CD4-positive, alpha-beta memory T cell (primary cell): ENCODE measurements at regions of chr3 and their contacts with region 1.

Region 1: DNA sequence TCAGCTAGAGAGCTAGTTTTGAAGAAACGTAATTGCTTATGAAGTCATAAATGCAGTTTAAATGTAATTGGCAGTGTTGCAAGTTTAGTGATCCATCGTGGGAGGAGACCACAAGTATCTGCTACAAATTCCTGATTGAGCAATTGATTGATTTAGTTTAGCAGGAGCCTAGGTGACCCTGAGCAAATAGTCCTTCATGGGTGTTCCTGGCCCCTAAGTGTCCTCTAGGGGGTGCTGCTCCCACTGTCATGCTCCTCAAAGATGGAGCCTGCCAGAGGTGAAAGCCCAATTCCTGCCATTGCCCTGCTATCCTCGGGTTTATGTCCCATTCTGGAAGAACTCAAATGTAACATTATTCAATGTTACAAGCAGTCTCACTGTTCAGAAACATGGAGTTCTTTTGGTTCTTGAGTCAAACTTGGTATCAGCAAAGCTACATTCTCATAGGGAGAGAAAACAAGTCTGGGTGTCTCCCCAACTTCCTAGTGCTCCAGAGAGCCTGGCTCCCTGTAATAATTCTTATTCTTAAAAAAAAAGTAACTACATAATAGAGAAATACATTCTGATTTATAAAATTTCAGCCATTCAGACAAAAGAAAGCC is 29.8 kb upstream of the SENP5 start:
- DNase-seq: peak; percentile 67 to 73 (median 70)
- H3K4me3 ChIP-seq: no peak overlapping the region
- H3K4me3 Mint-ChIP-seq: no peak overlapping the region
- H3K27ac ChIP-seq: no peak overlapping the region
- H3K27ac Mint-ChIP-seq: peak overlapping the region in 2 of 7 donors; percentile 22 to 27
- H3K4me1 ChIP-seq: no peaks in the 10 kb centered on the region
- H3K4me1 Mint-ChIP-seq: no peaks in the 10 kb centered on the region
- H3K27me3 ChIP-seq: no peaks in the 10 kb centered on the region
- H3K27me3 Mint-ChIP-seq: peaks cover 0 to 1% of the 10 kb centered on the region in 2 donors

Region 2: DNA sequence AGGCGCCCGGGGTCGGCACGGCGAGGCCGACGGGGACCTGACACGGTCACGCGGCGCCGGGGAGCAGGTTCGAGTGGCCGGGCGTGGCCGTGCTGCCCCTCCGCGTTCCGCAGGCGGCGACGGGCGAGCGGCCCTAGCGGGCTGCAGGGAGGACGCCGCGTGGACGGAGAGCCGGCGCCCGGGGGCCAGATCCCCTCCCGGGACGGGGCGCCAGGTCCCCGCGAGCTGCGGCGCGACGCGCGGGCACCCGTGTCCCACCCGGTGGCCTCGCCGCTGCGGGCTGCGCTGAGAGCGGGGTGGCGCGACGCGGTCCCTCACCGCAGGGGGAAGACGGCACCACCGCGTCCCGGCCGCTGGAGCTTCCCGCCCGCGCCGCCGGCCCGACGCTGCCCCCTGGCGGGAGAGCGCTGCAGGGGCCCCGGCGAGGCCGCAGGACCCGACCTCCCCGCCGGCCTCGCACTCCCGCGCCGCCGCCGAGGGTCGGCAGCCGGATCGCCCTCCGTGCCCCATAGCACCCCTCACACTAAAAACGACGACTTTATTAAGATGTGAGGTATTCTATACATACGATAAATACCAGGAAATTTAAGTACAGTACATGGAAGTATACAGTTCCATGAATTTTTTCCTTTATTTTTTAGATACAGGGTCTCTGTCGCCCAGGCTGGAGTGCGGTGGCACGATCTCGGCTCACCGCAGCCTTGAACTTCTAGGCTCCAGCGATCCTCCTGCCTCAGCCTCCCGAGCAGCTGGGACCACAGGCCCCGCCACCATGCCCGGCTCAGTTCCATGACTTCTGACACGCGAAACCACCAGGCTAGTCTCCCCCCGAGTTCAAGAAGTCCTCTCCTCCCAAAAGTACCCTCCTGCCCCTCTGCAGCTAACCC is 132.0 kb after region 1 on chr3:
- CTCF ChIA-PET with region 1: interaction called, 51 read pairs
- POLR2A ChIA-PET with region 1: interaction called, 6 read pairs
- intact Hi-C with region 1: loop called (anchors 1 kb)
- DNase-seq: peak; percentile 53 to 69 (median 68)
- H3K4me3 ChIP-seq: peak overlapping the region in 1 of 2 donors; percentile 64
- H3K4me3 Mint-ChIP-seq: peak overlapping the region; percentile 67 to 86 (median 80)
- H3K27ac ChIP-seq: peak overlapping the region; percentile 4
- H3K27ac Mint-ChIP-seq: peak overlapping the region in 3 of 7 donors; percentile 17 to 71 (median 41)
- H3K4me1 ChIP-seq: peaks cover 8% of the 10 kb centered on the region
- H3K4me1 Mint-ChIP-seq: peaks cover 0 to 16% (median 4%) of the 10 kb centered on the region in 4 donors
- H3K27me3 ChIP-seq: no peaks in the 10 kb centered on the region
- H3K27me3 Mint-ChIP-seq: peaks cover 0 to 1% of the 10 kb centered on the region in 2 donors

Region 3: DNA sequence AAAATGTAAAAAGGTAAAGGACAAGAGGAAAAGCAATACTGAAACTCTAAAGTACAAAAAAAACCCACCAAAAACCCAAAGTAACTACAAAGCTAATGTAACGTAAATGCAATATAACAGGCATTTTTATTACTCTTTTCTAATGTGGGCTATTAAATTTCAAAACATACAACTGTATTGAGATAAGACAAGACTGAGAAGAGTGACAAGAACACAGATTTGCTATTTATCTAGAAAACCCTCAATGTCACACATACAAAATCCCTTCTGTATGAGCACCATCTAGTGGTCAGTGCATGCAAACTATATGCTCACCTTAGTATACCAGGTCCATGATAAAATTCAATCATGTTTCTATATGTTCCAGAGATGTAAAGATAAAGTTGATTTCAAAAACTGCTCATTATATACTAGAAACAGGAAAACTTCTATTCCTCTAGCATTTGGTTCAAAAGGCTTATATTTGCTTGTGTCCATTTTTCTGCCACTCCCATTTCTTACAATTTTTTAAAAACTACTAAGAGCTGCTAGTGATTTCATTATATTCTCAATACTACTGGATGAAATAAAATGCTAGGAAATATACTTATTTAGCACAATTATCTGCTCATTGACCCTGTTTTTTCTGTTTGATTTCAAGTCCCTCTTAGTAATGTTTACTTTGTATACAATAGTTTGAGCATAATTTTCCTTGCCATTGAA is 349.1 kb after region 1 on chr3:
- CTCF ChIA-PET with region 1: interaction called, 4 read pairs
- POLR2A ChIA-PET with region 1: no interaction called
- intact Hi-C with region 1: loop called (anchors 1 kb)
- DNase-seq: peak; percentile 40 to 54 (median 48)
- H3K4me3 ChIP-seq: no peak overlapping the region
- H3K4me3 Mint-ChIP-seq: no peak overlapping the region
- H3K27ac ChIP-seq: no peak overlapping the region
- H3K27ac Mint-ChIP-seq: no peak overlapping the region
- H3K4me1 ChIP-seq: no peaks in the 10 kb centered on the region
- H3K4me1 Mint-ChIP-seq: peaks cover 6 to 23% (median 14%) of the 10 kb centered on the region in 4 donors
- H3K27me3 ChIP-seq: no peaks in the 10 kb centered on the region
- H3K27me3 Mint-ChIP-seq: no peaks in the 10 kb centered on the region